ENCODE measurements at regions of chr1 and their contacts with region 1.

Region 1: GRCh38 chr1:230713915-230714764 is at the start of gene AGT:
- DNase-seq: no peak
- H3K4me3 ChIP-seq: no peak within 1 kb of the TSS
- H3K27ac ChIP-seq: no peak within 1 kb of the TSS
- H3K4me1 ChIP-seq: no peaks in the 10 kb centered on the region
- H3K27me3 ChIP-seq: no peaks in the 10 kb centered on the region
- CTCF ChIP-seq: no peak
- POLR2A ChIP-seq: no peak
- total RNA-seq, gene AGT: not detected in 2 replicates

Region 2: DNA sequence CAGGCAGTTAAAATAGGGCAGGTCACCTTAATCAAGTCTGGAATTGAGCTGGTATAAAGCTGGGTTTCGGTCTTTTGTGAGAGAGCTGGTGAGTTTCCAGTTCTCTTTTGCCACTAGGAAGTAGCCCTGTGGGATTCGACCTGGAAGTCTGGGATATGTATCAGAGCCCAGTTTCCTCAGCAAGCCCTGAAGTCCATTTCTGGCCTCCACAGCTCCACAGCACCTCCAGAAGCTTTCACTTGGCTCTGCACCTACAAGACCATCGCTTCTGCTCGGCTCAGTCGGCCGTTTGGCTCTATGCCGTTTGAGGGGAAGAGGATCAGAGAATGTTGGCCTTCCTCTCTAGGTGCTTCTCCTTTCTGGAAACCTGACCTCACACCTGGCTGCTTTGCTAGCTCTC is 499.1 kb before region 1 on chr1:
- CTCF ChIA-PET with region 1: no interaction called
- POLR2A ChIA-PET with region 1: no interaction called
- dilution Hi-C with region 1: no loop called
- intact Hi-C with region 1: no loop called
- DNase-seq: peak; percentile 92
- H3K4me3 ChIP-seq: no peak overlapping the region
- H3K27ac ChIP-seq: peak overlapping the region; percentile 33
- H3K4me1 ChIP-seq: peaks cover 27% of the 10 kb centered on the region
- H3K27me3 ChIP-seq: no peaks in the 10 kb centered on the region
- CTCF ChIP-seq: peak; percentile 70 to 87
- POLR2A ChIP-seq: no peak

Region 3: DNA sequence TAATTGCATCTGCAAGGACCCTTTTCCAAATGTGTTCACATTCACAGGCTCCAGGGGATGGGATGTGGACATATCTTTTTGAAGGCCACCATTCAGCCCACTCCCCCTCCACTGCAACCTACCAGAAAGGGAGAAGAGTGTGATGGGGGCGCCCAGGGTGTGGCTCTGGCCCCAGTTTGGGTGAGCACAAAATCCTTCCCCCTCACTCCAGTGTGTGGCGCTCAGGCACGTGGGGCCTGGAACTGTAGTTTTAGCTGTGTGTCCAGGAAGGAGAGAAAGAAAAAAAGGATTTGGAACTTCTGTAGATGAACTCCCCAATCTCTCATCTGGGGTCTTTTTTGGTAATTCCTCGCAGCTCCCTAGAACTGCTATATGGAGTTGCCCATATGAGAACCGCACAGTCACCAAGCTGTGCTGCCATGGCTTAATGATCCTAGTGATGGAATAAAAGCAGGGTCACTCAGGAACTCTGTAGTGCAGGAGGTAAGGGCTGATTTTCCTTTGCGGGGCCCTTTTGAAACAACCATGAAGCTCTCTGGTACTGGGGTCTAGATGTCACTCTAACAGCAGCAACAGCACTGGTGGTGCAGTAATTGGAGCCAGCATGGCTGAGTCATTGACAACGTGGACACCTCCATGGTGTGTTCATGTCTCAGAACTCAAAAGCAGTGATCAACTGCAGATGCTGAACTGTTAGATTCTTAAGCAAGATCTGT is 17.3 kb before region 1 on chr1:
- CTCF ChIA-PET with region 1: no interaction called
- POLR2A ChIA-PET with region 1: no interaction called
- dilution Hi-C with region 1: no loop called
- intact Hi-C with region 1: loop called (anchors 1 kb)
- DNase-seq: no peak
- H3K4me3 ChIP-seq: no peak overlapping the region
- H3K27ac ChIP-seq: no peak overlapping the region
- H3K4me1 ChIP-seq: no peaks in the 10 kb centered on the region
- H3K27me3 ChIP-seq: no peaks in the 10 kb centered on the region
- CTCF ChIP-seq: no peak
- POLR2A ChIP-seq: no peak